ENCODE measurements at regions of chr1 and their contacts with region 1.

Region 1: GRCh38 chr1:84690397-84691121 is at the start of gene SSX2IP:
- DNase-seq: peak; percentile 100
- ATAC-seq: peak; percentile 86
- H3K4me3 Mint-ChIP-seq: peak within 1 kb of the TSS; percentile 91
- H3K27ac Mint-ChIP-seq: peak within 1 kb of the TSS; percentile 89
- H3K4me1 Mint-ChIP-seq: peaks cover 32% of the 10 kb centered on the region
- H3K27me3 Mint-ChIP-seq: no peaks in the 10 kb centered on the region
- CTCF ChIP-seq: no peak
- total RNA-seq, gene SSX2IP: 4.5 and 5.4 TPM in 2 replicates

Region 2: GRCh38 chr1:83998498-83999315 is 691.9 kb before region 1 on chr1 and contains the start of gene TTLL7:
- CTCF ChIA-PET with region 1: no interaction called
- POLR2A ChIA-PET with region 1: no interaction called
- intact Hi-C with region 1: loop called (anchors 2 kb)
- DNase-seq: peak; percentile 65
- ATAC-seq: peak; percentile 86
- H3K4me3 Mint-ChIP-seq: peak within 1 kb of the TSS; percentile 82
- H3K27ac Mint-ChIP-seq: no peak within 1 kb of the TSS
- H3K4me1 Mint-ChIP-seq: peaks cover 13% of the 10 kb centered on the region
- H3K27me3 Mint-ChIP-seq: peaks cover 41% of the 10 kb centered on the region
- CTCF ChIP-seq: no peak
- total RNA-seq, gene TTLL7: 0.12 TPM in 1 of 2 replicates, not detected in the other

Region 3: DNA sequence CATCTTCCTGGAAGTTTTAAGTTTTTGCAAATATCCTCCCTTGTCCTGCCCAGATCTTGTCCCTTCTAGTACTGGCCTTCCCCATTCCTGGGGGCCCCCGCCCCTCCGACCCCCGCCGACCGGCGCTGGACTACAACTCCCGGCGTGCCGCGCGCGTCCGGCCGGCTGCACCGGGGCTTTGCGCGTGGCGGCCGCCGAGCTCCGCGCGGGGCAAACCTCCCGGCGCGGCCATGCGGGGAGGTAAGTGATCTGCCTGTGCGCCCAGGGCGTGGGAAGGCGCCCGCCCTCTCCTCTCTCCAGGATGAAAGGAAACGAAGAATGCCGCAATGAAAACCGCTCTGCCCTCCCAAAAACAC is 392.3 kb before region 1 on chr1:
- CTCF ChIA-PET with region 1: no interaction called
- POLR2A ChIA-PET with region 1: no interaction called
- intact Hi-C with region 1: loop called (anchors 2 kb)
- DNase-seq: peak; percentile 58
- ATAC-seq: peak; percentile 91
- H3K4me3 Mint-ChIP-seq: peak overlapping the region; percentile 90
- H3K27ac Mint-ChIP-seq: peak overlapping the region; percentile 74
- H3K4me1 Mint-ChIP-seq: peaks cover 34% of the 10 kb centered on the region
- H3K27me3 Mint-ChIP-seq: peaks cover 8% of the 10 kb centered on the region
- CTCF ChIP-seq: no peak

Region 4: DNA sequence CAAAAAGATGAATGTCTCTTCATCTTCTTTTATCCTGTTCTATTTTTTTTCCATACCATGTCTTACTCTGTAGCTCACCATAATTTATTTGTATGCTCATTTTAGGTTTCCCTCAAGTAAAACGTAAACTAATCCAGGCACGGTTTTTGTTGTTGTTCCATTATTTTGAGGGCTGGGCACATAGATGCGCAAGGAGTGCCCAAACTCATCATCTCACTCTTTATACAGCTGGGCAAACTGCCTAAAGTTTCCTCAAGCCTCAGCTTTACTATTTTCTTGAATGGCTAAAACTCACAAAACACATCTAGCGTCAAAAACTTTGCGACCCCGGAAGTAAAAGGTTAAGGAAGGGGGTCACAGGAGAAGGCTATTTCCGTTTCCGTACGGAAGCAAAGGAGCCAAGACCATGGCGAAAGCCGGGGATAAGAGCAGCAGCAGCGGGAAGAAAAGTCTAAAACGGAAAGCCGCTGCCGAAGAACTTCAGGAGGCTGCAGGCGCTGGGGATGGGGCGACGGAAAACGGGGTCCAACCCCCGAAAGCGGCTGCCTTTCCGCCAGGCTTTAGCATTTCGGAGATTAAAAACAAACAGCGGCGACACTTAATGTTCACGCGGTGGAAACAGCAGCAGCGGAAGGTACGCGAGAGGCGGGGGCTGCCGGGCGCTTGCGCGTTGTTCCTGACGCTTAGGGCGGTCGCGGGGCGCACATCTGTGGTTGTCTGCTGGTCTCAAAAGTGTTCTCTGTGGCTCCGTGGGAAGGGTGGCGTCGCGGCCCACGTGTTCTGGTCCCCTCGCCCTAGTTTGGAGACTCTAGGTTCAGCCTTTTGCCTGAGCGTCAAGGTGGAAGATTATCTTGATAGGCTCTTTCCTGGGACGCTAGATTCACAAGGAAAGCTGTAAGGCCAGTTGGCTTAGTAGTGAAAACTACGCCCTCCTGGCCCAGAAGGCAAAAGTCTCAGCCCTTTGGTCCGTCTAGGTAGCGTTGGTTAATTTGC is 211.4 kb before region 1 on chr1 and contains the start of gene RPF1:
- CTCF ChIA-PET with region 1: no interaction called
- POLR2A ChIA-PET with region 1: no interaction called
- intact Hi-C with region 1: loop called (anchors 1 kb)
- DNase-seq: peak; percentile 64
- ATAC-seq: peak; percentile 96
- H3K4me3 Mint-ChIP-seq: peak within 1 kb of the TSS; percentile 97
- H3K27ac Mint-ChIP-seq: peak within 1 kb of the TSS; percentile 97
- H3K4me1 Mint-ChIP-seq: peaks cover 37% of the 10 kb centered on the region
- H3K27me3 Mint-ChIP-seq: peaks cover 21% of the 10 kb centered on the region
- CTCF ChIP-seq: no peak
- total RNA-seq, gene RPF1: 42.8 and 46.3 TPM in 2 replicates

Region 5: GRCh38 chr1:84996846-84997666 is 306.5 kb after region 1 on chr1 and contains the start of gene MCOLN2:
- CTCF ChIA-PET with region 1: no interaction called
- POLR2A ChIA-PET with region 1: no interaction called
- intact Hi-C with region 1: loop called (anchors 2 kb)
- DNase-seq: peak; percentile 60
- ATAC-seq: peak; percentile 67
- H3K4me3 Mint-ChIP-seq: peak within 1 kb of the TSS; percentile 85
- H3K27ac Mint-ChIP-seq: peak within 1 kb of the TSS; percentile 87
- H3K4me1 Mint-ChIP-seq: peaks cover 63% of the 10 kb centered on the region
- H3K27me3 Mint-ChIP-seq: peaks cover 2% of the 10 kb centered on the region
- CTCF ChIP-seq: no peak
- total RNA-seq, gene MCOLN2: 60.1 and 80.2 TPM in 2 replicates

Region 6: GRCh38 chr1:85707990-85708828 is 1017.6 kb after region 1 on chr1 and contains the start of gene ZNHIT6:
- CTCF ChIA-PET with region 1: no interaction called
- POLR2A ChIA-PET with region 1: no interaction called
- intact Hi-C with region 1: loop called (anchors 5 kb)
- DNase-seq: peak; percentile 69
- ATAC-seq: peak; percentile 96
- H3K4me3 Mint-ChIP-seq: no peak within 1 kb of the TSS
- H3K27ac Mint-ChIP-seq: no peak within 1 kb of the TSS
- H3K4me1 Mint-ChIP-seq: peaks cover 24% of the 10 kb centered on the region
- H3K27me3 Mint-ChIP-seq: no peaks in the 10 kb centered on the region
- CTCF ChIP-seq: no peak
- total RNA-seq, gene ZNHIT6: 19.6 and 21.1 TPM in 2 replicates

Measured in activated B cell treated with CpG ODN at 0.5 μM for 24 hours (primary cell).